CD8-positive, alpha-beta memory T cell (primary cell): ENCODE measurements at regions of chr11 and their contacts with region 1.

Region 1: GRCh38 chr11:74702383-74703007 is 28.7 kb downstream of the CHRDL2 start:
- DNase-seq: peak; percentile 30 to 73 (median 38)
- H3K4me3 ChIP-seq: no peak overlapping the region
- H3K4me3 Mint-ChIP-seq: no peak overlapping the region
- H3K27ac ChIP-seq: no peak overlapping the region
- H3K27ac Mint-ChIP-seq: no peak overlapping the region
- H3K4me1 ChIP-seq: no peaks in the 10 kb centered on the region
- H3K4me1 Mint-ChIP-seq: peaks cover 0 to 6% (median 0%) of the 10 kb centered on the region in 3 donors
- H3K27me3 ChIP-seq: no peaks in the 10 kb centered on the region
- H3K27me3 Mint-ChIP-seq: peaks cover 0 to 3% of the 10 kb centered on the region in 2 donors

Region 2: DNA sequence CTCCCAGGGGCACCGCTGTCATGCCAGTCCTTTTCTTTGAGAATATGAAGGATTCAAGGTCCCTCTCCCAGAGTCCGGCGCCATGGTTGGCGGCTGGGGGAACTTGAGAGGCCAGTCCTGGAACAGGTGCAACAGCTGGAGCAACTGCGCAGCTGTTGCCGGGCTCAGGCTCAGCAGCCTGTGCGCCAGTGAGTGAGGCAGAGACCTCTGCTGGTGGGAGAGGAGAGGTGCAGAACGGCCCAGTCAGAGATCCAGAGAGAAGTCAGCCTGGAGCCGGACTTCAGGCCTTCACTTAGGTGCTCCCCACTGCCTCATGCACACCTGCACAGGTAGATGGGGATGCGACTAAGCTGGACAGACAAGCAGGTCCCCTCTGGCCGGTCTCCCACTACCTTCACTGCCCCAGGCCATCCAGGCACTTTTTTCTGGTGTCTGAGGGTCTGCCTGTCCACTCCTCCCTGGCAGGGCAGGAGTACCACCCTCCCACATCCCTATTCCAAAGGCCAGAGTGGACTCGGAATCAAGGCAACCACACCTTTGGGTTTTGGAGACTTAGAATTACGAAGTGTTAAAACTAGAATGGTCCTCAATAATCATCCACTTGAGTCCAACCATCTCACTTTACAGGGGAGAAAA is 24.2 kb after region 1 on chr11:
- CTCF ChIA-PET with region 1: interaction called, 15 read pairs
- POLR2A ChIA-PET with region 1: no interaction called
- DNase-seq: peak; percentile 26 to 68 (median 32)
- H3K4me3 ChIP-seq: no peak overlapping the region
- H3K4me3 Mint-ChIP-seq: no peak overlapping the region
- H3K27ac ChIP-seq: no peak overlapping the region
- H3K27ac Mint-ChIP-seq: peak overlapping the region in 1 of 8 donors; percentile 23
- H3K4me1 ChIP-seq: peaks cover 3% of the 10 kb centered on the region
- H3K4me1 Mint-ChIP-seq: peaks cover 0 to 20% (median 3%) of the 10 kb centered on the region in 3 donors
- H3K27me3 ChIP-seq: peaks cover 9% of the 10 kb centered on the region
- H3K27me3 Mint-ChIP-seq: peaks cover 18 to 31% of the 10 kb centered on the region in 2 donors

Region 3: GRCh38 chr11:74773481-74773880 is 71.0 kb after region 1 on chr11:
- CTCF ChIA-PET with region 1: no interaction called
- POLR2A ChIA-PET with region 1: no interaction called
- DNase-seq: no peak
- H3K4me3 ChIP-seq: no peak overlapping the region
- H3K4me3 Mint-ChIP-seq: no peak overlapping the region
- H3K27ac ChIP-seq: no peak overlapping the region
- H3K27ac Mint-ChIP-seq: no peak overlapping the region
- H3K4me1 ChIP-seq: peaks cover 16% of the 10 kb centered on the region
- H3K4me1 Mint-ChIP-seq: peaks cover 62 to 82% (median 75%) of the 10 kb centered on the region in 3 donors
- H3K27me3 ChIP-seq: no peaks in the 10 kb centered on the region
- H3K27me3 Mint-ChIP-seq: no peaks in the 10 kb centered on the region